Colonic mucosa (tissue), 4 donors: ENCODE measurements at regions of chr17 and their contacts with region 1.

Region 1: DNA sequence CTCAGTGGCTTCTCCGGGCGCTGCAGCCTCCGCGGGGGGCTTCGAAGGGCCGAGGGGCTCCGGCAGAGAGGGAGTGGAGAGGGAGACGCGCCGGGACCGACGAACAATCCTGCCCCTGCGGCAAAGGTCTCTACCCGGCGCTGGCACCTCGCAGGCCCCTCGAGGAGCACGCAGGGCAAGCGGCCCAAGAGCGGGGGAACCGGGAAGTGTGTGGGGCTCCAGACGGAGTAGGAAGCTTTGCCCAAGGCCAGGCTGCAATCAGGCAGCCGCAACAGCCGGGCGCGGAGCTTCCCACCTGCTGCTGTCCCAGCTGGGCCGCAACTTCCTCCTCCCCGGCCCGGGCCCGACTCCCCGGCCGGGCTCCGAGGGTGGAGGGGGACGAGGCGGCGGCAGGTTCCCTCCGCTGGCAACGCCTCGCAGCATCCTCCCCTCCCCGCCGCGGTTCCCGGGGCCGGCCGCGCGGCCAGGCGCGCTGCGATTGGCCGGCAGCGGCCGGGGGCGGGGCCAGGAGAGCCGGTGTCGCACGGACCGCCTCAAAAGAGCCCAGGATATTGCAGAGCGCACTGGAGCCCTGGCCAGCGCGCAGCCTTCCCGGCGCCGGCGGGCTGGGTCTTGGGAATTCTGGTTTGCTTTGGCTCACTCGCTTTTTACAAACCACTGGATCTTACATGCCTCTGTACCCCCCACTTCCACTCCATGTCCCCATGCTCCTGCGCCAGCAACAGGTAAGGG is at the start of gene KCNJ2:
- DNase-seq: peak; percentile 89
- H3K4me3 ChIP-seq: peak within 1 kb of the TSS; percentile 74
- H3K27ac ChIP-seq: peak within 1 kb of the TSS; percentile 93
- H3K4me1 ChIP-seq: peaks cover 3% of the 10 kb centered on the region
- H3K27me3 ChIP-seq: no peaks in the 10 kb centered on the region
- CTCF ChIP-seq: no peak
- total RNA-seq, gene KCNJ2: 7.4 to 18.2 TPM

Region 2: DNA sequence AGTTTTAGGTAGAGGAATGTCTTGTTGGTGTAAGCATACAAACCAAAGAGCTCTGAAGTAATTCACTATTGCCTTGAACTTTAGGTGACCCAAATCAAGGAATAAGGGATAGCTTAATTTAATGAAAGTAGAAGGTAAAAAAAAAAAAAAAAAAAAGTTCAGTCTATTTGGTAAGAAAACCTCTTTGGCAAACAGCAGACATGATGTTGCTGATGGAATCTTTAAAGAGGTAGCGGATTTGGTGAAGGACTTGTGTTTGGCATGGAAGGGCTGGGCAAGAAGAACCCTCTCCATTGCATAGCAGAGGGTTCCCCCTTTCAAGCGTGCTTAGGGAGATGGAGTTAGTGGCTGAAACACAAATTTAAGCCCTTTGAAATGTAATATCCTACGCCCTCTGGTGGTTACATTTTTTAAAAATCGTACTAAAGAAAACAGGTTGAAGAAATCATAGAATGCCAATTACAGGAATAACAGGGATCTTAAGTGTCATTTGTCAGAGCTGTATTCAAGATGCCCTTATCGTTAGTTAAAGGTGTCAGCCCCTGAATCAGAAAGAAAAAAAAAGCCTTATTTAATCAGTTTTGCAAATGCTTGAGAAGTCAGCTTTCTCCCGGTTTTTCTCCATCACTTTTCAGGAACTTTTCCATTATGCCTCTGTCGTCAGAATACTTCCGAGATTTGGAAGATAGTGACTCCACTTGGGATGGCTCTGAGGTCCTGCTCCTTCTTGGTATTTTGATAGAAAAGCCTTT is 383.3 kb after region 1 on chr17:
- intact Hi-C with region 1: loop called (anchors 5 kb)
- DNase-seq: no peak
- H3K4me3 ChIP-seq: no peak overlapping the region
- H3K27ac ChIP-seq: no peak overlapping the region
- H3K4me1 ChIP-seq: no peaks in the 10 kb centered on the region
- H3K27me3 ChIP-seq: no peaks in the 10 kb centered on the region
- CTCF ChIP-seq: peak; percentile 35